ENCODE measurements at regions of chr4 and their contacts with region 1.

Region 1: DNA sequence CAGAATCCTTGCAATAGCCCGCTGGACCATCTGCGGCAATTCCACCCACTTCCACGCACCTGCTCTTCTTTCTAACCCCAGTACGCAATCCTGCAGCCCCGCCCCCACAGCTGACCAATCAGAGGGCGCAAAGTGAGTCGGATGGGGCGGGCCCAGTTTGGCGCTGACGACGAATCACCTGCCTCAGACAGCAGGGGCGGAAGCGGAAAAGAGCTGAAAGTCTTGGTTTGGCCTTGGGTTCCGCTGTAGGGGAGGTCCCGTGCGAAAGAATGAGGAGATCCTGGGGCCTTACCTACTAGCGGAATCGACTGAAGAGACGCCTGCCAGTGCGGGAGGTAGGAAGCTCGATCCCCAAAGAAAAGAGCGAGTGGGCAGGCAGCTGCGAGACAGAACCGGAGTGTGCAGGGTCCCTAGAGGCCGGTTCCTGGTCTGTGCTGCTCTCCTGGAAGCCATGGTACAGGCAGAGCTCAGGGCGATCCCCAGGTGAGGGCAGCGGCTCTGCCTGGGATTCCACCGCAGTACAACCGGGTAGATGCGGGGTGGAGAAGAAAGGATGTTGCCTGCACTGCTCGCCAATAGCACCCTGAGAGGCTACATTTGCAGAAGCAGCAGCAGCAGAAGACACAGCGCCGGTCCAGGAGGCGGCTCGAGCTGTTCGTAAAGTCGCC is at the start of gene TMEM184C:
- DNase-seq: peak; percentile 99
- H3K4me3 Mint-ChIP-seq: peak within 1 kb of the TSS; percentile 100
- H3K27ac Mint-ChIP-seq: peak within 1 kb of the TSS; percentile 98
- H3K4me1 Mint-ChIP-seq: peaks cover 25% of the 10 kb centered on the region
- H3K27me3 Mint-ChIP-seq: no peaks in the 10 kb centered on the region
- total RNA-seq, gene TMEM184C: 15.5 to 15.7 TPM

Region 2: GRCh38 chr4:147683717-147684700 is 66.7 kb after region 1 on chr4 and contains the start of gene PRMT9:
- CTCF ChIA-PET with region 1: interaction called, 12 read pairs
- POLR2A ChIA-PET with region 1: interaction called, 12 read pairs
- intact Hi-C with region 1: loop called (anchors 1 kb)
- DNase-seq: peak; percentile 93
- H3K4me3 Mint-ChIP-seq: peak within 1 kb of the TSS; percentile 85
- H3K27ac Mint-ChIP-seq: peak within 1 kb of the TSS; percentile 88
- H3K4me1 Mint-ChIP-seq: peaks cover 24% of the 10 kb centered on the region
- H3K27me3 Mint-ChIP-seq: no peaks in the 10 kb centered on the region
- total RNA-seq, gene PRMT9: 7.9 to 8.3 TPM

Region 3: GRCh38 chr4:147780137-147780777 is 162.9 kb after region 1 on chr4:
- CTCF ChIA-PET with region 1: no interaction called
- POLR2A ChIA-PET with region 1: no interaction called
- intact Hi-C with region 1: no loop called
- DNase-seq: peak; percentile 40
- H3K4me3 Mint-ChIP-seq: no peak overlapping the region
- H3K27ac Mint-ChIP-seq: no peak overlapping the region
- H3K4me1 Mint-ChIP-seq: peaks cover 44% of the 10 kb centered on the region
- H3K27me3 Mint-ChIP-seq: no peaks in the 10 kb centered on the region

Region 4: DNA sequence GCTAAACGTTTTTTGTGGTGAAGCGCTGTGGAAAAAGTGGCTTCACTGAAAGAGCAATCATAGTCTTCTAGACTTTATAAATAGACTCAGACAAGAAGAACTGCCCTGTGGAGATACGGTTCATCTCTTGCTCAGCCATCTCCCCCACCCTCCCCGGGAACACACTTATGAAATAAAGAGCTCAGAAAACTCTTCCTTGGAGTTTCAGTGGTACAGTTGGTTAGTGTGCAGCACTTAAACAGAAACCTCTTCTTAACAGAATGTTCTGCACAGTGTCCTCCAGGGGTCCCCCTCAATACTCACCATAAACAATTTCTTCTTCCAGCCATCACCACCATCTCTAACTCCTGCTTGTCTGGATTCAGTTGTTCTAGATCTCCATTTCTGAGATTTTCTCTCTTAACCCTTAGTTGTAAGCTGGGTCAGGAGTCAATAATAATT is 427.6 kb after region 1 on chr4:
- CTCF ChIA-PET with region 1: no interaction called
- POLR2A ChIA-PET with region 1: no interaction called
- intact Hi-C with region 1: no loop called
- DNase-seq: no peak
- H3K4me3 Mint-ChIP-seq: no peak overlapping the region
- H3K27ac Mint-ChIP-seq: no peak overlapping the region
- H3K4me1 Mint-ChIP-seq: peaks cover 24% of the 10 kb centered on the region
- H3K27me3 Mint-ChIP-seq: no peaks in the 10 kb centered on the region

Measured in activated CD4-positive, alpha-beta memory T cell treated with anti-CD3 and anti-CD28 coated beads for 36 hours (primary cell).